Activated B cell treated with CpG ODN at 0.5 μM for 24 hours (primary cell): ENCODE measurements at regions of chr1 and their contacts with region 1.

Region 1: GRCh38 chr1:110292031-110292741 is 47.0 kb upstream of the RBM15 start:
- DNase-seq: no peak
- ATAC-seq: no peak
- H3K4me3 Mint-ChIP-seq: no peak overlapping the region
- H3K27ac Mint-ChIP-seq: no peak overlapping the region
- H3K4me1 Mint-ChIP-seq: no peaks in the 10 kb centered on the region
- H3K27me3 Mint-ChIP-seq: no peaks in the 10 kb centered on the region
- CTCF ChIP-seq: no peak

Region 2: GRCh38 chr1:110224240-110224995 is 67.8 kb before region 1 on chr1:
- CTCF ChIA-PET with region 1: no interaction called
- POLR2A ChIA-PET with region 1: no interaction called
- intact Hi-C with region 1: loop called (anchors 5 kb)
- DNase-seq: no peak
- ATAC-seq: no peak
- H3K4me3 Mint-ChIP-seq: no peak overlapping the region
- H3K27ac Mint-ChIP-seq: no peak overlapping the region
- H3K4me1 Mint-ChIP-seq: no peaks in the 10 kb centered on the region
- H3K27me3 Mint-ChIP-seq: no peaks in the 10 kb centered on the region
- CTCF ChIP-seq: no peak

Region 3: GRCh38 chr1:110356405-110356804 is 64.2 kb after region 1 on chr1:
- CTCF ChIA-PET with region 1: no interaction called
- POLR2A ChIA-PET with region 1: no interaction called
- intact Hi-C with region 1: no loop called
- DNase-seq: no peak
- ATAC-seq: no peak
- H3K4me3 Mint-ChIP-seq: no peak overlapping the region
- H3K27ac Mint-ChIP-seq: no peak overlapping the region
- H3K4me1 Mint-ChIP-seq: peaks cover 18% of the 10 kb centered on the region
- H3K27me3 Mint-ChIP-seq: no peaks in the 10 kb centered on the region
- CTCF ChIP-seq: no peak